ENCODE measurements at regions of chr12 and their contacts with region 1.

Region 1: GRCh38 chr12:3275171-3276041 is 198.2 kb downstream of the TSPAN9 start:
- DNase-seq: peak; percentile 87
- ATAC-seq: peak; percentile 61

Region 2: DNA sequence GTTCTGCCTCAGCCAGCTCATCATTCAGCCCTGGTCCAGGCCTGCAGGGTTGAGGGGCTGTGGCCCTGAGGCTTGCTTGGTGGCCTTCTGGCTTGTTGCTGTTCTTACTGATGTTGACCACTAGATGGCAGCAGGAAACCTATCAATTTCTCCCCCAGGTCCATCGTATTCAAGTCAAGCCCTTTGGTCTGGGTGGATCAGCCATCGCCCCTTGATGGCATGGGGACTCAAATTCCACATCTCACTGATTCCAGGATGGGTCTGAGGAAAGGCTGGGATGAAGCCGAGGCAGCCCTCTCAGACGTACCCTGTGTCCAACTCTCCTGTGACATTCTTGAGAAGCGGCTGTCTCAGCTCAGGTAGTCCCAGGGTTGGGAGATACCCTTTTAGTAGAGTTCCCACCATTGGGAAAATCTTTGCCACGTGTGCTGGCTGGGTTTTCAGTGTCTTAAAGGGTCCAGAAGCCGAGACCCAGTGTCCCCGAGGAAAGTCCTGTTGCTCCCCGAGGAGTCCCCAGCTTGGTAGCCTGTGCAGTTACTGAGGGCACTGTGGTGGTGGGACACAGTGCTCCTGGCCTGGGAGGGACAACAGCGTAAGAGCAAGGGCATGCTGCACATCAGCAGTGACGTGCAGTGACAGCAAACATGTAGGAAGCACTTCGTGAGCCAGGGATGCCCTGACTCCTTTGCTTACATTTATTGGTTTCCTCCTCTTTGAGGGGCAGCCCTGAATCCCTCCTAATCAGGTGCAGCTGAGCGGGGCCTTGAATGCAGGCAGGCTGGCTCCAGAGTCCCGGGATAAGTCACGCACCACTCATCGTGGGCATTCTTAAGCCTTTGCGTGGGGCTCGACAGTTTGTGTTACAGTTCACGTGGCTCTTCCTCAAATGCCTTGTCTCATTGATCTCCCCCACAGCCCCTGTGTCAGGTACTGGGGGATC is 139.6 kb before region 1 on chr12:
- intact Hi-C with region 1: loop called (anchors 1 kb)
- DNase-seq: no peak
- ATAC-seq: peak; percentile 48

Measured in Right ventricle myocardium inferior (tissue), 1 donor.